ENCODE measurements at regions of chr3 and their contacts with region 1.

Region 1: DNA sequence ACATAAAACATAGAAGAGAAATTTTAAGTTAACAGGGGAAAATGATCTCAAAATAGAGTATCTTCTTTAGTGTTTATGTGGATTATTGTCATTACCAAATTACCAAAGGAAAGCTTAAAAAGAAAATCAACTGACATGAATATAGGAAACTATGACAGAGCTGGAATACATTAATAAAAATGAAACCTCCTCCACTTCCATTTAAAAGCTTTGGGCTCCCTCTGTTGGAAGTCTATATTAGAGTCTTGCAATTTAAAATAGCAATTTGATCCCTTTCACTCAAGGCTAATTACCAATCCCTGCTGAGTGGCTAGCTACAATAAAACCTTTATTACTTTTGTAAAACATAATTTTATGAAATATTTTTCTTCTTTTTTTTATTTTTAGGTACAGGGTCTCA is 61.4 kb upstream of the IMPG2 start:
- DNase-seq: no peak
- H3K4me3 ChIP-seq: no peak overlapping the region
- H3K27ac ChIP-seq: peak overlapping the region in 1 of 4 donors; percentile 2
- H3K4me1 ChIP-seq: peaks cover 0 to 57% (median 41%) of the 10 kb centered on the region in 4 donors
- H3K27me3 ChIP-seq: no peaks in the 10 kb centered on the region
- CTCF ChIP-seq: peak in 3 of 4 experiments; percentile 23 to 56 (median 54)
- EP300 ChIP-seq: no peak
- POLR2A ChIP-seq: no peak

Region 2: DNA sequence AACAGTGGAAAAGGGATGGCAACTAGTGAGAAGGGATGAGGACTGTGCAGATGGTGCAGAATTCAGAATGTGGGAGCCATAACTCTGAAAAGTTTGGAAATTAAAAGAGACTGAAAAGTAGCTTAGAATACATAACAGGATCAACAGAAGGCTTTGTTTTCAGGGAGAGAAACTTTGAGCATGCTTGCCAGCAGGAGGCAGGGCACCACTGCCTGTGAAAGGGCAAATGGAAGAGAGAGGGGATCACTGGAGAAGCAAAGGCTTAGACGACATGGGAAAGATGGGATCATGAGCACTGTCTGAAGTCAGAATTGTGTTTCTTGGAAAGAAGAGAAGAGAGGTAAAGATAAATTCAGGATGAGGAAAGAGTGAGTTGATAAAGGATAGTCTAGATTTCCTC is 488.2 kb before region 1 on chr3:
- intact Hi-C with region 1: loop called (anchors 10 kb)
- DNase-seq: no peak
- H3K4me3 ChIP-seq: no peak overlapping the region
- H3K27ac ChIP-seq: no peak overlapping the region
- H3K4me1 ChIP-seq: no peaks in the 10 kb centered on the region
- H3K27me3 ChIP-seq: no peaks in the 10 kb centered on the region
- CTCF ChIP-seq: peak in 3 of 4 experiments; percentile 20 to 47 (median 44)
- EP300 ChIP-seq: no peak
- POLR2A ChIP-seq: no peak

Region 3: DNA sequence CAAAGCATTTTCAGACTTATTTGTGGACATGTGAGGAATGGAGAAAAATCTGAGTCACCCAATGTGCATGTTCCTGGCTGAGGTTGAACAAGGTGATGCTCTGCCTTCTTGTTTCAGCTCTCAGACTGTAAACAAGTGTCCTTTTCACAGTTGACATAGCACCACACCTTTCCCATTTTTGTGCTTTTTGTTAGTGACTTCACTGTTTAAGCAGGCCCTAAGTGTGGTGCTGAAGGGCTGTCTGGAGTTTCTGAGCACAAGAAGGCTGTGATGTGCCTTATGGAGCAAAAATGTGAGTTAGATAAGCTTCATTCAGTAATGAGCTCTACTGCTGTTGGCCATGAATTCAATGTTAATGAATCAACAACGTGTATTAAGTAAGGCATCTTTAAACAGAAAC is 408.9 kb before region 1 on chr3:
- intact Hi-C with region 1: loop called (anchors 10 kb)
- DNase-seq: no peak
- H3K4me3 ChIP-seq: no peak overlapping the region
- H3K27ac ChIP-seq: peak overlapping the region in 3 of 4 donors; percentile 2 to 50 (median 30)
- H3K4me1 ChIP-seq: peaks cover 0 to 51% (median 38%) of the 10 kb centered on the region in 4 donors
- H3K27me3 ChIP-seq: no peaks in the 10 kb centered on the region
- CTCF ChIP-seq: no peak
- EP300 ChIP-seq: no peak
- POLR2A ChIP-seq: no peak

Region 4: GRCh38 chr3:101281521-101282030 is 100.2 kb before region 1 on chr3:
- intact Hi-C with region 1: no loop called
- DNase-seq: no peak
- H3K4me3 ChIP-seq: no peak overlapping the region
- H3K27ac ChIP-seq: no peak overlapping the region
- H3K4me1 ChIP-seq: no peaks in the 10 kb centered on the region
- H3K27me3 ChIP-seq: no peaks in the 10 kb centered on the region
- CTCF ChIP-seq: no peak
- EP300 ChIP-seq: no peak
- POLR2A ChIP-seq: no peak

Region 5: GRCh38 chr3:101340591-101340990 is 41.2 kb before region 1 on chr3:
- intact Hi-C with region 1: no loop called
- DNase-seq: no peak
- H3K4me3 ChIP-seq: no peak overlapping the region
- H3K27ac ChIP-seq: no peak overlapping the region
- H3K4me1 ChIP-seq: no peaks in the 10 kb centered on the region
- H3K27me3 ChIP-seq: no peaks in the 10 kb centered on the region
- CTCF ChIP-seq: no peak
- EP300 ChIP-seq: no peak
- POLR2A ChIP-seq: no peak

Region 6: DNA sequence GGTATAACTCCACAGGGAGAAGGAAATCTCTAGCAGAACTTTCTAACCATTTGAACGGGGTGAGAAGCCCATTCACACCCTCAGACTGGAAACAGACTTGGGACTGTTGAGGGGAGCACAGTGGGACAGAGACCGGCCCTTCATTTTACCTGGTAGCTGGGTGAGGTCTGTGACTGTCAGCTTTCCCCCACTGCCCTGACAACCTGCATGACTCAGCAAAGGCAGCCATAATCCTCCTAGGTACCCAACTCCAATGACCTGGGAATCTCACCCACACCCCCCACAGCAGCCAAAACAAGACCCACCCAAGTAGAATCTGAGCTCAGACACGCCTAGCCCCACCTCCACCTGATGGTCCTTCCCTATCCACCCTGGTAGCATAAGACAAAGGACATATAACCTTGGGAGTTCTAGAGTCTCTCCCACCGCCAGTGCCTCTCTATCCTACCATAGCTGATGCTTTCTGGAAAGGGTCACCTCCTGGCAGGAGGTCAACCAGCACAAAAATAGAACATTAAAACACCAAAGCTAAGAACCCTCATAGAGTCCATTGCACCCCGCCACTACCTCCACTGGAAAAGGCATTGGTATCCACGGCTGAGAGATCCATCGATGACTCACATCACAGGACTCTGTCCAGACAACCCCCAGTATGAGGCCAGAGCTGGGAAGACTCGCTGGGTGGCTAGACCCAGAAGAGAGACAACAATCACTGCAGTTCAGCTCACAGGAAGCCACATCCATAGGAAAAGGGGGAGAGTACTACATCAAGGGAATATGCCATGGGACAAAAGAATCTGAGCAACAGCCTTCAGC is 103.2 kb after region 1 on chr3:
- intact Hi-C with region 1: no loop called
- DNase-seq: no peak
- H3K4me3 ChIP-seq: no peak overlapping the region
- H3K27ac ChIP-seq: no peak overlapping the region
- H3K4me1 ChIP-seq: peaks cover 0 to 17% (median 4%) of the 10 kb centered on the region in 4 donors
- H3K27me3 ChIP-seq: no peaks in the 10 kb centered on the region
- CTCF ChIP-seq: no peak
- EP300 ChIP-seq: no peak
- POLR2A ChIP-seq: no peak

Region 7: DNA sequence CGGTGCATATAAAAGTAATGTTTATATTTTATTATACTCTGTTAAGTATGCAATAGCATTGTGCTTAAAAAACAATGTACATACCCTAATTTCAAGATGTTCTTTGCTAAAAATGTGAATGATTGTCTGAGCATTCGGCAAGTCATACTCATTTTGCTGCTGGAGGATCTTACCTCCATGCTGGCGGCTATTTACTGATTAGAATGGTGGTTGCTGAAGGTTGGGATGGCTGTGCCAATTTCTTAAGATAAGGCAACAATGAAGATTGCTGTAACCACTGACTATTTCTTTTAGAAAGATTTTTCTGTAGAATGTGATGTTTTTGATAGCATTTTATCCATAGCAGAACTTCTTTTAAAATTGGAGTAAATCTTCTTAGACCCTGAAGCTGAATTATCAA is 1985.7 kb after region 1 on chr3:
- intact Hi-C with region 1: no loop called
- DNase-seq: no peak
- H3K4me3 ChIP-seq: no peak overlapping the region
- H3K27ac ChIP-seq: no peak overlapping the region
- H3K4me1 ChIP-seq: no peaks in the 10 kb centered on the region
- H3K27me3 ChIP-seq: no peaks in the 10 kb centered on the region
- CTCF ChIP-seq: no peak
- EP300 ChIP-seq: no peak
- POLR2A ChIP-seq: no peak

Measured in sigmoid colon (tissue), 7 donors.